Activated CD8-positive, alpha-beta T cell treated with anti-CD3 and anti-CD28 coated beads for 36 hours (primary cell): ENCODE measurements at regions of chr14 and their contacts with region 1.

Region 1: DNA sequence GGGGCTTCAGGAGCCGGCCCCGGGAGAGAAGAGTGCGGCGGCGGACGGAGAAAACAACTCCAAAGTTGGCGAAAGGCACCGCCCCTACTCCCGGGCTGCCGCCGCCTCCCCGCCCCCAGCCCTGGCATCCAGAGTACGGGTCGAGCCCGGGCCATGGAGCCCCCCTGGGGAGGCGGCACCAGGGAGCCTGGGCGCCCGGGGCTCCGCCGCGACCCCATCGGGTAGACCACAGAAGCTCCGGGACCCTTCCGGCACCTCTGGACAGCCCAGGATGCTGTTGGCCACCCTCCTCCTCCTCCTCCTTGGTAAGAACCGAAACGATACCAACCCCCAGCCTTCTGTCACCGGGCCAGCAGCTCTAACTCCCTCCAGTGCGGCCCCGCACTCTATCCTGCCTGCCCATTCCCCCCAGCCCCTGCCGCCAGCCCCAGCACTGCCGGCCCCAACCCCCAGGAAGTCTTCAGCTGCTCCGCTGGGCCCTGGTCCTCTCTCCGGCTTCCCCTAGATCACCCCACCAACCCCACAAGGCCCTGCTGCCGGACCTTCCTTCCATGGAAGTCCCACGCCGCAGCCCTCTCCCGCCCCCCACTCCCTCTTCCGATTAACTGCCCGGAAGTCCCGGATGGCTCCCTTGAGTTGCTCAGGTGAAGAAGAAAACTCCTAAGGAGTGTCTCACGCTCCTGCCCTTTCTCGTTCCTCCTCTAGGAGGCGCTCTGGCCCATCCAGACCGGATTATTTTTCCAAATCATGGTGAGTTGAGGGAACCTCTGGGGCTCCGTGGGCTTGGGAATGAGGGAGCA is 693 bp downstream of the LRP10 start:
- DNase-seq: peak; percentile 78
- ATAC-seq: peak; percentile 22
- H3K4me3 Mint-ChIP-seq: peak overlapping the region; percentile 93
- H3K27ac Mint-ChIP-seq: peak overlapping the region; percentile 79
- H3K4me1 Mint-ChIP-seq: peaks cover 25% of the 10 kb centered on the region
- H3K27me3 Mint-ChIP-seq: no peaks in the 10 kb centered on the region
- CTCF ChIP-seq: peak; percentile 91

Region 2: DNA sequence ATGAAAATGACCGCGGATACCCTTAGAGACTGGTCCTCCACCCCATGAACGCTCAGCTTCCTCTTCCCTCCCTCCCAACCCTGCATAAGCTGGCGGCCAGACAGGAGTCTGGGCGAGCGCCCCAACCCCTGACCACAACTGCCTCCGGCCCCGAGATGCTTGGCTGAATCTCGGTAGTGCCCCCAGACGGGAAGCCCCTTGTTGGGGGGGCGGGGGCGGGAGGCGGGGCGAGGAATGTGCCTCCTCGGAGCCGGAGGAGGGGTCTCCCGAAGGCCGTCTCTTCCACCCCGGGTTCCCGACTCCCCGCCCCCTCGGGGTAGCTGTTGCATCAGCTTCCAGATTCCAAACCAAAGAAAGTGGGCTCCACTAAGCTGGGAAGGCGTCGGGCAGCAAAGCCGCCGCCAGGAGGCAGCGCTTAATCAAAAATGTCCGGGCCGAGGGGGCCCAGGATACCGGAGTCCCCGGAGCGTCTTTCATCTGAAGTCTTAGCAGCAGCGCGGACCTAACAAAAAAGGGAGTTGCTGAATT is 49.6 kb before region 1 on chr14:
- CTCF ChIA-PET with region 1: interaction called, 469 read pairs
- POLR2A ChIA-PET with region 1: interaction called, 3 read pairs
- intact Hi-C with region 1: no loop called
- DNase-seq: peak; percentile 78
- ATAC-seq: peak; percentile 83
- H3K4me3 Mint-ChIP-seq: peak overlapping the region; percentile 59
- H3K27ac Mint-ChIP-seq: no peak overlapping the region
- H3K4me1 Mint-ChIP-seq: peaks cover 27% of the 10 kb centered on the region
- H3K27me3 Mint-ChIP-seq: peaks cover 13% of the 10 kb centered on the region
- CTCF ChIP-seq: peak; percentile 95

Region 3: DNA sequence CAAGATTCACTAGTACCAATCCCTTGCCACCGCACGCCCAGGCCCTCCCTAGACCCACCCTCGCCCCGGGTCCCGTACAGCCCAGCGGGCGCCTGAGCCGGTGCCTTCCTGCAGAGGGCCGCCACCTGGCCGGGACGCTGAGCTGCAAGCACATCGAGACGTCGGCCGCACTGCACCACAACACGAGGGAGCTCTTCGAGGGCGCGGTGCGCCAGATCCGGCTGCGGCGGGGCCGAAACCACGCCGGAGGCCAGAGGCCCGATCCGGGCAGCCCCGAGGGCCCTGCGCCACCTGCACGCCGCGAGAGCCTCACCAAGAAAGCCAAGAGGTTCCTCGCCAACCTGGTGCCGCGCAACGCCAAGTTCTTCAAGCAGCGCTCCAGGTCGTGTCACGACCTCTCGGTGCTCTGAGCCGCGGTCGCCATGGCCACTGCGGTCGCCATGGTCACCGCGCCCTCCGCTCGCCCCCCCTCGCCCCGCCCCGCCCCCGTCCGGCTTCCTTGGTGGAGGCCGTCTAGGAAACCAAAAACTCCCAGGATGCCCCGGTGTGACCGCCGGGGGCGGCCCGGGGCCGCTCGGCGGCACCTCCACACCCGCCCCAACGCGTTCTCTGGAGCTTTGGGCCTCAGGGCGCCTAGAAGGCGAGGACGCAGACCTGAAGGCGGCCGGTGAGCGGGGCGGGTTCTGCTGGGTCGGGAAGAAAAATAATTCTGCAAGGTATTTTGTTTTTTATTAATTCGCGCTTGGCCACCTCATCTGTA is 14.4 kb after region 1 on chr14:
- CTCF ChIA-PET with region 1: interaction called, 187 read pairs
- POLR2A ChIA-PET with region 1: interaction called, 15 read pairs
- intact Hi-C with region 1: no loop called
- DNase-seq: peak; percentile 81
- ATAC-seq: peak; percentile 71
- H3K4me3 Mint-ChIP-seq: peak overlapping the region; percentile 70
- H3K27ac Mint-ChIP-seq: peak overlapping the region; percentile 77
- H3K4me1 Mint-ChIP-seq: peaks cover 38% of the 10 kb centered on the region
- H3K27me3 Mint-ChIP-seq: peaks cover 1% of the 10 kb centered on the region
- CTCF ChIP-seq: peak; percentile 35

Region 4: GRCh38 chr14:22910916-22911315 is 38.7 kb after region 1 on chr14:
- CTCF ChIA-PET with region 1: interaction called, 14 read pairs
- POLR2A ChIA-PET with region 1: no interaction called
- intact Hi-C with region 1: loop called (anchors 5 kb)
- DNase-seq: no peak
- ATAC-seq: no peak
- H3K4me3 Mint-ChIP-seq: no peak overlapping the region
- H3K27ac Mint-ChIP-seq: no peak overlapping the region
- H3K4me1 Mint-ChIP-seq: peaks cover 29% of the 10 kb centered on the region
- H3K27me3 Mint-ChIP-seq: no peaks in the 10 kb centered on the region
- CTCF ChIP-seq: no peak

Region 5: GRCh38 chr14:22929104-22929847 is 57.0 kb after region 1 on chr14 and contains the start of gene PRMT5:
- CTCF ChIA-PET with region 1: interaction called, 17 read pairs
- POLR2A ChIA-PET with region 1: interaction called, 3 read pairs
- intact Hi-C with region 1: no loop called
- DNase-seq: peak; percentile 99
- ATAC-seq: peak; percentile 96
- H3K4me3 Mint-ChIP-seq: no peak within 1 kb of the TSS
- H3K27ac Mint-ChIP-seq: no peak within 1 kb of the TSS
- H3K4me1 Mint-ChIP-seq: peaks cover 31% of the 10 kb centered on the region
- H3K27me3 Mint-ChIP-seq: no peaks in the 10 kb centered on the region
- CTCF ChIP-seq: no peak
- total RNA-seq, gene PRMT5: 107 to 116 TPM

Region 6: GRCh38 chr14:23104591-23105347 is 232.5 kb after region 1 on chr14 and contains the start of gene CIROP:
- CTCF ChIA-PET with region 1: no interaction called
- POLR2A ChIA-PET with region 1: no interaction called
- intact Hi-C with region 1: no loop called
- DNase-seq: no peak
- ATAC-seq: no peak
- H3K4me3 Mint-ChIP-seq: no peak within 1 kb of the TSS
- H3K27ac Mint-ChIP-seq: no peak within 1 kb of the TSS
- H3K4me1 Mint-ChIP-seq: no peaks in the 10 kb centered on the region
- H3K27me3 Mint-ChIP-seq: no peaks in the 10 kb centered on the region
- CTCF ChIP-seq: no peak
- total RNA-seq, gene CIROP: not detected